Activated CD4-positive, alpha-beta T cell treated with anti-CD3 and anti-CD28 coated beads, Interleukin-2, amount 10 ng/mL, durations not matched to agents 7 days and 5 days (primary cell): ENCODE measurements at regions of chr6 and their contacts with region 1.

Region 1: GRCh38 chr6:5302995-5303622 is 41.8 kb downstream of the FARS2 start:
- DNase-seq: peak; percentile 66
- H3K4me3 Mint-ChIP-seq: no peak overlapping the region
- H3K27ac Mint-ChIP-seq: peak overlapping the region; percentile 27
- H3K4me1 Mint-ChIP-seq: peaks cover 37% of the 10 kb centered on the region
- H3K27me3 Mint-ChIP-seq: no peaks in the 10 kb centered on the region

Region 2: DNA sequence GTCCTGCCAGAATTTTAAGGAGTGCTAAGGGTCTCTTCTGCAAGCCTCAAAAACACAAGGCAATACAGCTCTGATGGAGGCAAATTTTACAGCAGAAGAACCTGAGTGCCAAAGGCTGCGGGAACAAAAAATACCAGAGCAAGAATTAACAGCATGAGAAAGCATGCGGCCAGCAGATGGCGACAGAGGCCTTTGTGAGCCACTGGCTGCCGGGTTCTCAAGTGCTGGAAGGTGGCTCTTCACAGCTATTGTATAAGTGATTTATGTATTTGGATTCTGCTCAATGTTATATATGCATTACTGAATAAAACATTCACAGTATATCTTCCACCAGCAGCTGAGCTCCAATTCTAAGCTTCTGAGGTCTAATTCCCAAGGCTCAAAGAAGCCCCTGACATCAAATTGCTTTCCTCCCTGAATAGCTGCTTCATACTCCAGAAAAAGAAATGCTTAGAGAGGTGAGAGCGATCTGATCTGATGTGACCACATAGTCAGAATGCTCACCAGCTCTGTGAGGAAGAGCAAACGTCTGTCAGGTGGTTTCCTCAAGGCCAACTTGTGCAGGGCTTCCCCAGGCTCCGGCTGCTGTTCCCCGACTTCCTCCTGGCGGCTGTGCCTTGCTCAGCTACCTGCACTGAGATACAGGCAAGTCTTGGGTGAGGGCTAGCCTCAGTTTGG is 159.3 kb before region 1 on chr6:
- CTCF ChIA-PET with region 1: interaction called, 14 read pairs
- POLR2A ChIA-PET with region 1: no interaction called
- DNase-seq: peak; percentile 88
- H3K4me3 Mint-ChIP-seq: no peak overlapping the region
- H3K27ac Mint-ChIP-seq: no peak overlapping the region
- H3K4me1 Mint-ChIP-seq: peaks cover 10% of the 10 kb centered on the region
- H3K27me3 Mint-ChIP-seq: no peaks in the 10 kb centered on the region

Region 3: DNA sequence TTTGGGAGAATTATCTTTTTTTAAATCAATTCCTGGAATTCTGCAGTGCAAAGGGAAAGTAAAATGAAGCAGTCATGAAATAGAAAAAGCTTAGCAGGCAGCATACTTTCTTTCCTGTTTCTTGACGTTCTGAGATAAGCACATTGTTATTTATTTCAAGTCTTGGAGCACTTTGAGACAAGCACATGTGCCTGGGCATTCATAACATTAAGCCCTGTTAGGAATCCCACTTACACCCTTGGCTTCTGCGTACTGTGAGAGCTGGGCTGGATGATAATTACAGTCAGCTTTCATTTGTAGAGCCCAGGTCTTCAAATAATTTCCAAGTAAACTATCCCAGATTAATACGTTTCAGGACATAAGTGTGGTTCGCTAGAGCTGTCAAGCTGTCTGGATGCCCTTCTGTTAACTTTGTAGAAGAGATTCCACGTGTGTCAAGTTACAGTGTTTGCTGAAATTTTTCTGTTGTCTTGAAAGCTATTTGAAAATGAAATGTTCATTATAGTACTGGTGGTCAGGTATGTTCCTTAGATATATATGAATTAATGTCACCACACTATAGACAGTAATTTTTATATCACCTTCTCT is 32.9 kb before region 1 on chr6:
- CTCF ChIA-PET with region 1: interaction called, 11 read pairs
- POLR2A ChIA-PET with region 1: no interaction called
- DNase-seq: no peak
- H3K4me3 Mint-ChIP-seq: no peak overlapping the region
- H3K27ac Mint-ChIP-seq: no peak overlapping the region
- H3K4me1 Mint-ChIP-seq: peaks cover 53% of the 10 kb centered on the region
- H3K27me3 Mint-ChIP-seq: no peaks in the 10 kb centered on the region

Region 4: GRCh38 chr6:5315881-5316280 is 12.8 kb after region 1 on chr6:
- CTCF ChIA-PET with region 1: interaction called, 11 read pairs
- POLR2A ChIA-PET with region 1: no interaction called
- DNase-seq: no peak
- H3K4me3 Mint-ChIP-seq: no peak overlapping the region
- H3K27ac Mint-ChIP-seq: no peak overlapping the region
- H3K4me1 Mint-ChIP-seq: no peaks in the 10 kb centered on the region
- H3K27me3 Mint-ChIP-seq: no peaks in the 10 kb centered on the region

Region 5: GRCh38 chr6:5328800-5329199 is 25.7 kb after region 1 on chr6:
- CTCF ChIA-PET with region 1: no interaction called
- POLR2A ChIA-PET with region 1: no interaction called
- DNase-seq: no peak
- H3K4me3 Mint-ChIP-seq: no peak overlapping the region
- H3K27ac Mint-ChIP-seq: no peak overlapping the region
- H3K4me1 Mint-ChIP-seq: no peaks in the 10 kb centered on the region
- H3K27me3 Mint-ChIP-seq: no peaks in the 10 kb centered on the region